T47D (cell line): ENCODE measurements at regions of chr21 and their contacts with region 1.

Region 1: DNA sequence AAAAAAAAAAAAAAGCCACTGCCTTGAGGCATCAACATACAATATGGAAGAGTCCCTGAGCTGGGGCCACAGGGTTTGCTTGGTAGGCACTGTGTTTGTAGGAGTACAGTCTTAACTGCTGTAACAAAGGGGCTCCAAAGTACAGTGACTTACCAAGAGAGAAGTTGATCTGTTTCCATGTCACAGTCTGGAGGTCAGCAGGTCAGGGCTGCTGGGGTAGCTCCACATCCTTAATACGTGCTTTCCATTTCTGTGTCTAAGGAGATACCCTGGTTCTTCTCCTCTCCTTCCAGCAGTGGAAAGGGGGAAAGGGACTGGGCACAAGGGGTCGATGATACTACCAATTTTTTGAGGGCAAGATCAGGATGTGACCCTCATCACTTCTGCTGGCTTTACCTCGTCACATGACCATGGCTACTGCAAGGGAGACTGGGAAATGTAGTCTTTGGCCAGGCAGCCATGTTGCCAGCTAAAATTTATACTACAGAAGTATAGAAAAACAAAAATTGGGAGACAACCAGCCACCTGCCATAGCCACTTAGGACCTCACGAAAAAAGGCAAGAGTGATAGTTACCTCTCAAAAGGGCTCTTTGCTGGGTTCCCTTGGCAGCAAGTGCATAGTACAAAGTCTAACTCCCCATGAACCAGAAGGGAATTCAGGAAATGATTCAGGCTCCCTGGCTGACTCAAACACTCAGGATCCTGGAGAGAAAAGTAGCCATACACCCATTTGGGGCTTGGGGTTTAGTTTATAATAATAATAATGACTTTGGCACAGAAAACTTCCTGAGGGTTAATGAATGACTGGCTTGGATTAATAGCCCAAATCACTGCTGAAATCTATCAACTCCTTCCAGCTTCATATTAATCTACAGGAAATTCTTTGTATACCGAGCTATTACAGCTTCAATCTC is 52.7 kb upstream of the ATP5PO start:
- DNase-seq: peak in 1 of 2 experiments; percentile 29

Region 2: GRCh38 chr21:34073032-34073869 is 104.9 kb after region 1 on chr21 and contains the starts of genes MRPS6 and SLC5A3:
- in situ Hi-C with region 1: loop called (anchors 25 kb)
- DNase-seq: peak; percentile 60 to 92